ENCODE measurements at regions of chr1 and their contacts with region 1.

Region 1: DNA sequence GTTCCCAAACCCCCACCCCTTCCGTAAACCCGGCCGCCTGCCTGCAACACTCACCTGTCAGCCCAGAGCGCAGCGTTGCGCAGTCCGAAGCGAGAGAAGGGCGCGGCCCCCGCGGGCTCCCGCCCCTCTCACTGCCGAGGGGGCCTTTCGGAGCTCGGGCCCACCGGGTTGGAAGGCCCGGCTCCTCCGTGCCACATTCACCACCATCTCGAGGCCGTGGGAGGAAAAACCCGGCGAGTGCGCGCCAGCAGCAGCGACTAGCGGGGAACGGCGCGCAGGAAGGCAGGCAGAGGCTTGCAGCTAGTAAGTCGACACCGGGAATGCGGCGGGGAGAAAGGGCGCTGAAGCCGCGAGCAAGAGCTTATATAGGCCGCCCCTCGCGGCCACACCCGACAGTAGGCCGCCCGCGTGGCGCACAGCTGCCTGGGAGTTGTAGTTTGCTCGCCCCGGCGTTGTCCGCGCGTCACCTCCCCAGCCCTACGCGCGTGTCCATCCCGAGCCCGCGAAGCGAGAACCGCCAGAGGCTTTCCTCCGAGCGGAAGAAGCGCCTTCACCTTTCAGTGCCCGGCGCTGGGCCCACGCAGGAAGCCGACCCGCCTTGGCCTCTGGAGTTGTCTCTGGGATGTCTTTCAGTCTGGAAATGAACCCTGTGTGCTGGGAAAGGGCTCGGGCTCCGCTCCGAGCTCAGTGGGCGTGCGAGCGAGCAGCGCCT is 10.4 kb upstream of the RAB42 start:
- DNase-seq: peak; percentile 96
- CTCF ChIP-seq: no peak

Region 2: DNA sequence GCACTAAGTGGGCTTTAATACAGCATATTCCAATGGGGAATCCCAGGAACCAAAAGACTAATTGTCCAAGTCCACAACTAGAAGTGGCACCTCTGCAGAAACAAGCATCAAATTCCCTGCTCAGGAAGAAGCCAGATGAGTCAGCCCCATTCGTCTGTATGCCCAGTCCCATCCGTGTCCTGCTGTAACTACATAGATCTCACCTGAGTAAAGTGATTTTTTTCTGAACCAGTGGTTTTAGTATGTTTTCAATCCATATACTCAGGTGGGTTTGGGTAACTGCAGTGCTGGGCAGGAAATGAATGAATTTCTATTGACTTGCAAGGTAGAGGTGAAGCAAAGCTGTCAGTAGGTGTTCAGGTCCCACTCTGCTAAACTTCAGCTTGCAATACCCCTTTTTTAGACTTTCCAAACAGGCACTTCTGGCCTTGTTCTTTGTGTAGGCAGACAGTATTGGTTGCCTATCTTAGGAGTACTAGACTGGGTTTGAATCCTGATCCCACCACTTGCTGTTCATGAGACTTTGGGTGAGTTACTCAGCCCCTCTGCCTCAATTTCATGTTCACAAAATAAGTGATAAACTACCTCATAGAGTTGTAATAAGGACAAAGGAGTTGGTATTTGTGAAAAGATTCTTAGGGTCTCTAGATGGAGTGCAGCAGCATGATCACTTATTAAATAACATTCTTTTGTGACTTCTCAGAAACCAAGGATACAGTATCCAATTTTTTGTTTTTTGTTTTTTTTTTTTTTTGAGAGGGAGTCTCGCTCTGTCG is 70.8 kb before region 1 on chr1:
- CTCF ChIA-PET with region 1: interaction called, 7 read pairs
- POLR2A ChIA-PET with region 1: interaction called, 36 read pairs
- DNase-seq: no peak
- CTCF ChIP-seq: no peak

Region 3: DNA sequence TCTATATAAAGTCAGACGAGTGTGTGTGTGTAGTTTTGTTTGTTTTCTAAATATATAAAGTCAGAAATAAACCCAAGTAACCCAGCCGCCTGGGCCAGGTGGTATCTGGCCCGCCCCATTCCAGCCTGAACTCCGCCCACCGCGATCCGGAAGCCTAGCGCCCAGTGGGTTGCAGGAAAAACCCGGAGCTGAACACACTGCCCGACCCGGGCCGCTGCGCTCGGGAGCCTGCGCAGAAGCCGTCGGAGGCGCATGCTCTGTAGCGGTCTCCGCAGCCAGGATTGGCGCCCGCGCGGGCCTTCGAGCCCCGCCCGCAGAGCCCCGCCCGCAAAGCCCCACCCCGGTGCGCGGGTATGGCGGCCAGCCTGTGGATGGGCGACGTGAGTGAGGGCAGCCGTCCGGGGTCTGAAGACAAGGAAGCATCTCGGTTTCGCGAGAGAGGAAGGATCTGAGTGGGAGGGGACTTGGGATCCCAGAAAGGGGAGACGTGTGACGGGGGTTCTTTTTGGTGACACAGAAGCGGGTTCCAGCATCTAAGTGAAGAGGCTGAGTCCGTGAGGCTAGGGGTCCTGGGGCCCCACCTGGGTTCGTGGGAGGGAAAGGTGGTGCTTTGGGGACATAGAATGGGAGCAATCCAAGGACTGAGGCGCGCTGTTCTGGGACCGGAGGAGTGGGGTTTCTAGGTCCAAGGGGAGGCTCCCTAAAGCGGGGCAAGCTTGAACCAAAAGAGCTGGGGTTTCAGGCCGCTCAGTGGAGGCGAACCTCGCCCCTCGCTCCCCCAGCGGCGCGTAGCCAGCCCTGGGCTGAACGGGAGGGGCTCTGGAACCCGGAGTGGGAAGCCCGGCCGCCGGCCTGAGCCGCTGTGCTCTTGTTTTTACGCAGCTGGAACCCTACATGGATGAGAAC is 28.7 kb before region 1 on chr1 and contains the start of gene TRNAU1AP:
- CTCF ChIA-PET with region 1: interaction called, 7 read pairs
- POLR2A ChIA-PET with region 1: interaction called, 64 read pairs
- DNase-seq: peak; percentile 97
- CTCF ChIP-seq: peak; percentile 0

Region 4: GRCh38 chr1:28602536-28603439 is 21.1 kb after region 1 on chr1:
- CTCF ChIA-PET with region 1: interaction called, 29 read pairs
- POLR2A ChIA-PET with region 1: interaction called, 35 read pairs
- DNase-seq: peak; percentile 56
- CTCF ChIP-seq: peak; percentile 75

Region 5: GRCh38 chr1:28668191-28668955 is 86.7 kb after region 1 on chr1 and contains the start of gene GMEB1:
- CTCF ChIA-PET with region 1: no interaction called
- POLR2A ChIA-PET with region 1: interaction called, 11 read pairs
- DNase-seq: peak; percentile 96
- CTCF ChIP-seq: no peak

Measured in GM10248 (cell line).